IMR-90 (cell line): ENCODE measurements at regions of chr7 and their contacts with region 1.

Region 1: DNA sequence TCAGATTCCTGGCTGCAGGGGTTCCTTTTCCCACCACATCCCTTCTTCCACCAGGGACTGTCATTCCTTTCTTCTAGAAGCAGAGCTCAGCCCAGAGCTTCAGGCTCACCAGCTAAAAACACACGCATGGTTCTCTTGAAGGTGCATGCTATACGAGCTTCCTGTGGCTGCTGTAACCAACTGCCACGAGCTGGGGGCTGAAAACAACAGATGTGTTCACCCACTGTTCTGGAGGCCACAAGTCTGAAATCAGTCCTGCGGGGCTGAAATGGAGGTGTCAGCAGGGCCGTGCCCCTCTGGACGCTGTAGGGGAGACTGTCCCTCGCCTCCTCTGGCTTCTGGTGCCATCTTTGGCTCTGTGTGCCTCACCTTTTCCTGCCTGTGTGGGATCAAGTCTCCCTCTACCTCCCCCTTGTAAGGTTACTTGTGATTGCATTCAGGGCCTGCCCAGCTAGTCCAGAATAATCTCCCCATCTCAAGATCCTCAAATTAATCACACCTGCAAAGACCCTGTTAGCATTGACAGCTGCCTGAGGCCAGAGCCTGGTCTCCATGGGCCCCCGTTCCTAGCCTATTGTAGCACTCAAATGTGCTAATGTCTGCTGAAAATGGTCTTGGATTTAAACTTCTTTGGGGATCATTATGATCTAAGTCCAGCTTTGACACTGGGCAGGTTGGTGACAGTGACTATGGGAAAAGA is 13.7 kb downstream of the RAB19 start:
- DNase-seq: no peak
- ATAC-seq: no peak
- H3K4me3 ChIP-seq: no peak overlapping the region
- H3K27ac ChIP-seq: no peak overlapping the region
- H3K4me1 ChIP-seq: peaks cover 4% of the 10 kb centered on the region; the same call in 1 of the 2 replicates
- H3K27me3 ChIP-seq: peaks cover 26% of the 10 kb centered on the region
- CTCF ChIP-seq: no peak
- POLR2A ChIP-seq: no peak
- RAD21 ChIP-seq: no peak

Region 2: GRCh38 chr7:140661121-140661520 is 243.5 kb after region 1 on chr7:
- CTCF ChIA-PET with region 1: no interaction called
- POLR2A ChIA-PET with region 1: interaction called, 17 read pairs
- dilution Hi-C with region 1: no loop called
- in situ Hi-C with region 1: no loop called
- intact Hi-C with region 1: no loop called
- DNase-seq: peak; percentile 31
- ATAC-seq: peak; percentile 42
- H3K4me3 ChIP-seq: no peak overlapping the region
- H3K27ac ChIP-seq: no peak overlapping the region
- H3K4me1 ChIP-seq: peaks cover 4% of the 10 kb centered on the region; the same call in 1 of the 2 replicates
- H3K27me3 ChIP-seq: peaks cover 3% of the 10 kb centered on the region; the same call in 1 of the 2 replicates
- CTCF ChIP-seq: peak; percentile 41
- POLR2A ChIP-seq: no peak
- RAD21 ChIP-seq: peak; percentile 43

Region 3: GRCh38 chr7:140697447-140698143 is 280.0 kb after region 1 on chr7:
- CTCF ChIA-PET with region 1: no interaction called
- POLR2A ChIA-PET with region 1: no interaction called
- dilution Hi-C with region 1: no loop called
- in situ Hi-C with region 1: no loop called
- intact Hi-C with region 1: no loop called
- DNase-seq: peak; percentile 64
- ATAC-seq: no peak
- H3K4me3 ChIP-seq: peak overlapping the region; percentile 92
- H3K27ac ChIP-seq: peak overlapping the region; percentile 94
- H3K4me1 ChIP-seq: peaks cover 5% of the 10 kb centered on the region
- H3K27me3 ChIP-seq: no peaks in the 10 kb centered on the region
- CTCF ChIP-seq: no peak
- POLR2A ChIP-seq: no peak
- RAD21 ChIP-seq: no peak